ENCODE measurements at regions of chr7 and their contacts with region 1.

Region 1: GRCh38 chr7:100827330-100828227 is at the start of gene EPHB4:
- DNase-seq: peak; percentile 97
- H3K4me3 ChIP-seq: peak within 1 kb of the TSS; percentile 98
- H3K27ac ChIP-seq: peak within 1 kb of the TSS; percentile 80
- H3K4me1 ChIP-seq: peaks cover 8% of the 10 kb centered on the region
- H3K27me3 ChIP-seq: no peaks in the 10 kb centered on the region
- CTCF ChIP-seq: peak; percentile 67
- total RNA-seq, gene EPHB4: 90.4 and 92.6 TPM in 2 replicates

Region 2: GRCh38 chr7:100493476-100494264 is 333.9 kb before region 1 on chr7:
- CTCF ChIA-PET with region 1: no interaction called
- POLR2A ChIA-PET with region 1: no interaction called
- intact Hi-C with region 1: no loop called
- DNase-seq: no peak
- H3K4me3 ChIP-seq: no peak overlapping the region
- H3K27ac ChIP-seq: no peak overlapping the region
- H3K4me1 ChIP-seq: no peaks in the 10 kb centered on the region
- H3K27me3 ChIP-seq: no peaks in the 10 kb centered on the region
- CTCF ChIP-seq: no peak

Region 3: DNA sequence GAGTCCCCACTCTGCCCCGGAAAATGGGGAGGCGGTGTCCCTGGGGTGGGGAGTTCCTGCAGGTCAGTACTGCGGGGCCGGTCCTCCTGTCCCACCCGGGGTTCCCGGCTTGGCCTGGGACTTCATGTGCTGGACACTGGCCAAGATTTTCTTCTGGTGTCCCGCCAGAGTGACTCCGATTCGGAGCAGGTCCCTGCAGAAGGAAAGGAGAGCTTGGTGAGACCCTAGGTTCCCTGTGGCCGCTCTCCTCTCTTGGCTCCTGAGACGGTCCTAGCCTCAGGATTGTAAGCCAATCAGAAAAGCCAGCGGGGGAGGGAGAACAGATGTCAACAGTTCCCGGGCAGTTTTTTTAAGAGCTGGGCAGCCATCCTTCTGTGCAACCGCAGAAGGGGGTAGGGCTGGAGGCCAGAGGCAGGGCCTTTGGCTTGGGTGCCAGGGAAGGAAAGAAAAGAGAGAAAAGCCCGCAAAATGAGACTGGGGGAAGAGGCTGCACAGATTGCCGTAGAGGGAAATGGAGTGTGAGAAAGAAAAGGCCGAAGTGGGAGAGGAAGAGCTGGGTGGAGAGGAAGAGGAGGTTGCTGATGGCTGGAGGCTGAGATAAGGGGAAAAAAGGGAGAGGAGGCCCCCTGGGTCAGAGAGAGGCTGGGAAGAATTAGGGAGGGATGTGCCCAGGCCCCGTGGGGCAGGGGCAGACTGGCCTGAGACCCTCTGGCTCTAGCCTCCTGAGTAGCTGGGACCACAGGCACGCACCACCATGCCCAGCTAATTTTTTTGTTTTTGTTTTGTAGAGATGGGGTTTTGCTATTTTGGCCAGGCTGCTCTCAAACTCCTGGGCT is 24.0 kb before region 1 on chr7:
- CTCF ChIA-PET with region 1: interaction called, 4 read pairs
- POLR2A ChIA-PET with region 1: no interaction called
- intact Hi-C with region 1: loop called (anchors 2 kb)
- DNase-seq: peak; percentile 73
- H3K4me3 ChIP-seq: no peak overlapping the region
- H3K27ac ChIP-seq: peak overlapping the region; percentile 45
- H3K4me1 ChIP-seq: peaks cover 20% of the 10 kb centered on the region
- H3K27me3 ChIP-seq: no peaks in the 10 kb centered on the region
- CTCF ChIP-seq: no peak